Calu3 (cell line): ENCODE measurements at regions of chr7 and their contacts with region 1.

Region 1: DNA sequence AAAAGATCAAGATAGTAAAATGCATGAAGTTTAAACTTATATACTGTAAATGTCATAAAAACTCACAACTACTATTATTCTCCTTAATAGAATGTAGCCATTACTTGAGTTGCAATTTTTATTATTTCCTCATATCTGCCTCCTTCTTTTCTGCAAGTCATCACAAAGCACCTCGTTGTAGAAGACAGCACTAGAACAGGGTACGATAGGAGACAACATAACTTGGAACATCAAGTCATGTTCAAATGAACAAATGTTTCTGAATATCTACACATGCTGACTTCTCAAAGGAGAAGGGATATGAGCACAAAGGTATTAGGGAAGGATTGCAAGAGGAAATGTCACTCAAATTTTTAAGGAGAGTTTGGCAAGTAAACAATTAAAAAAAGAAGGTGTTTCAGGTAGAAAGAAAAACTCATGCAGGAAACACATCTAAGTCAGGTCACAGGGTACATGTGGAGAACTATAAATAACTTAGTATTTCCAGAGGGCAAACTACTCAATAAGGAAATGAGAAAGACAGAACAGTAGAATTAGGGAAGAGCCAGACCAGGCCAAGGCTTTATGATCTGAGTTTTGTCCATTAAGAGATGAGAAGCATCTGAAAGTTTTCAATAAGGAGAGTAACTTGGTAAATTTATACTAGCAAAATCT is 186.7 kb downstream of the CRPPA start:
- DNase-seq: no peak
- H3K4me3 Mint-ChIP-seq: no peak overlapping the region
- H3K27ac Mint-ChIP-seq: peak overlapping the region; percentile 8
- H3K4me1 Mint-ChIP-seq: peaks cover 22% of the 10 kb centered on the region
- H3K27me3 Mint-ChIP-seq: no peaks in the 10 kb centered on the region
- CTCF ChIP-seq: no peak

Region 2: DNA sequence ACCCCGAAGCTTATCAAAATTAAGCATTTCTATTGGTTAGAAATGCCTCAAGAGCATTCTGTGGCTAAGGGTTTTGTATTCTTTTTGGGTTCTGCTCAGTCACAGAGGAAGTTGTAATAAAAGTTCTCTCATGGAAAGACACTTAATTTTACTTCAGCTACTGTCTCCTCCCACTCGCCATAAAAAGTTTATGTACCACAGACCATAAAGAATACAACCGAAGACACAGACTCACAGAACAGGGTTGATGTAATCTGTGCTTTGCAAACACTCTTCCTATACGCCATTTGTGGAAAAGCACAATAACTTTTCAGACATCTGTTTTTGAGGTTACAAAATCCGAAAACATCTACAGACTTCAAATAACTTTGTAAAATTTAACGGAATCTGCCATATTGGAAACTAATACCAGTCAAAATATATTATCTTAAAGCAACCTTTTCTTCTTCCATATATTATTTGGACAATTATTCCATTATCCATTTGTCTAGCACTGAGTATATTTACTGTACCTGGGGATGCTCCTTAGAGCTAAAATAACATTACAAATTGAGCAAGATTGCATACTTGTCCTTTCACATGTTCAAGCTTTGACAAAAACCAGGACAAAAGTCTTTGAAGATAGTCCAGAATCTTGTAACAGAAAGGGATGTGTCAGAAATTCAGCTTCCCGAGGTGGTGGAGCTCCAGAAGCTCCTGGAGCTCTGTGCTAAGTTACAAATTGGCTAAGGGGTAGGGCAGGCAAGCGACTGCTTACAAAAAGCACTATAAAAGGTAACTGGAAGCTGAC is 329.2 kb before region 1 on chr7:
- CTCF ChIA-PET with region 1: no interaction called
- intact Hi-C with region 1: no loop called
- DNase-seq: no peak
- H3K4me3 Mint-ChIP-seq: no peak overlapping the region
- H3K27ac Mint-ChIP-seq: no peak overlapping the region
- H3K4me1 Mint-ChIP-seq: no peaks in the 10 kb centered on the region
- H3K27me3 Mint-ChIP-seq: no peaks in the 10 kb centered on the region
- CTCF ChIP-seq: no peak

Region 3: DNA sequence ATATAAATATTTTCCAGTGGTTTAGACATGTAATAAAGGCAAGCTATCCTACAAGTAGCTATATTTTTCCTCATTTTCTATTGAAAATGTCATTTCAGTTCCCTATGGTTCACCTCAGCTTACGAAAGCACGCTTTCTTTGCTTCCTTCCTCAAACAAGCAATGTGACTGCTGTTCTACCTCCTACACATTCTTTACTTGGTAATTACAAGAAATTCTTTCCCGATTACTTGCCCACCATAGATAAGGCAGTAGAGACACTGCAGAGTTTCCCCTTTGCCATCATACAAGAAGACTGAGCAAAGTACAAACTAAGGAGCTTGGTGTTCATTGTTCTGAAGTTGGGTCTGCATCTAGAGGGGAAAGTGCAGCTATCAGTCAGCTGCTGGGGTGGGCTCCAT is 62.7 kb before region 1 on chr7:
- CTCF ChIA-PET with region 1: no interaction called
- intact Hi-C with region 1: loop called (anchors 5 kb)
- DNase-seq: peak; percentile 13
- H3K4me3 Mint-ChIP-seq: no peak overlapping the region
- H3K27ac Mint-ChIP-seq: peak overlapping the region; percentile 12
- H3K4me1 Mint-ChIP-seq: peaks cover 12% of the 10 kb centered on the region
- H3K27me3 Mint-ChIP-seq: no peaks in the 10 kb centered on the region
- CTCF ChIP-seq: no peak

Region 4: GRCh38 chr7:16395131-16395530 is 160.5 kb after region 1 on chr7:
- CTCF ChIA-PET with region 1: no interaction called
- intact Hi-C with region 1: no loop called
- DNase-seq: no peak
- H3K4me3 Mint-ChIP-seq: no peak overlapping the region
- H3K27ac Mint-ChIP-seq: no peak overlapping the region
- H3K4me1 Mint-ChIP-seq: no peaks in the 10 kb centered on the region
- H3K27me3 Mint-ChIP-seq: no peaks in the 10 kb centered on the region
- CTCF ChIP-seq: no peak